PC-3 (cell line): ENCODE measurements at regions of chr1 and their contacts with region 1.

Region 1: GRCh38 chr1:46442317-46443161 is 47.1 kb upstream of the DMBX1 start:
- DNase-seq: peak; percentile 82
- ATAC-seq: peak; percentile 86
- H3K4me3 ChIP-seq: peak overlapping the region; percentile 65
- H3K27ac ChIP-seq: no peak overlapping the region
- H3K4me1 ChIP-seq: no peaks in the 10 kb centered on the region; the same call in 1 of the 2 replicates
- H3K27me3 ChIP-seq: no peaks in the 10 kb centered on the region
- CTCF ChIP-seq: peak; percentile 87

Region 2: GRCh38 chr1:46406881-46407608 is 35.5 kb before region 1 on chr1:
- CTCF ChIA-PET with region 1: no interaction called
- POLR2A ChIA-PET with region 1: no interaction called
- intact Hi-C with region 1: loop called (anchors 2 kb)
- DNase-seq: no peak
- ATAC-seq: no peak
- H3K4me3 ChIP-seq: no peak overlapping the region
- H3K27ac ChIP-seq: no peak overlapping the region
- H3K4me1 ChIP-seq: peaks cover 2% of the 10 kb centered on the region; the same call in 1 of the 2 replicates
- H3K27me3 ChIP-seq: no peaks in the 10 kb centered on the region
- CTCF ChIP-seq: no peak

Region 3: GRCh38 chr1:46425726-46426125 is 16.8 kb before region 1 on chr1:
- CTCF ChIA-PET with region 1: interaction called, 3 read pairs
- POLR2A ChIA-PET with region 1: interaction called, 12 read pairs
- intact Hi-C with region 1: no loop called
- DNase-seq: no peak
- ATAC-seq: no peak
- H3K4me3 ChIP-seq: no peak overlapping the region
- H3K27ac ChIP-seq: no peak overlapping the region
- H3K4me1 ChIP-seq: no peaks in the 10 kb centered on the region
- H3K27me3 ChIP-seq: no peaks in the 10 kb centered on the region
- CTCF ChIP-seq: no peak

Region 4: DNA sequence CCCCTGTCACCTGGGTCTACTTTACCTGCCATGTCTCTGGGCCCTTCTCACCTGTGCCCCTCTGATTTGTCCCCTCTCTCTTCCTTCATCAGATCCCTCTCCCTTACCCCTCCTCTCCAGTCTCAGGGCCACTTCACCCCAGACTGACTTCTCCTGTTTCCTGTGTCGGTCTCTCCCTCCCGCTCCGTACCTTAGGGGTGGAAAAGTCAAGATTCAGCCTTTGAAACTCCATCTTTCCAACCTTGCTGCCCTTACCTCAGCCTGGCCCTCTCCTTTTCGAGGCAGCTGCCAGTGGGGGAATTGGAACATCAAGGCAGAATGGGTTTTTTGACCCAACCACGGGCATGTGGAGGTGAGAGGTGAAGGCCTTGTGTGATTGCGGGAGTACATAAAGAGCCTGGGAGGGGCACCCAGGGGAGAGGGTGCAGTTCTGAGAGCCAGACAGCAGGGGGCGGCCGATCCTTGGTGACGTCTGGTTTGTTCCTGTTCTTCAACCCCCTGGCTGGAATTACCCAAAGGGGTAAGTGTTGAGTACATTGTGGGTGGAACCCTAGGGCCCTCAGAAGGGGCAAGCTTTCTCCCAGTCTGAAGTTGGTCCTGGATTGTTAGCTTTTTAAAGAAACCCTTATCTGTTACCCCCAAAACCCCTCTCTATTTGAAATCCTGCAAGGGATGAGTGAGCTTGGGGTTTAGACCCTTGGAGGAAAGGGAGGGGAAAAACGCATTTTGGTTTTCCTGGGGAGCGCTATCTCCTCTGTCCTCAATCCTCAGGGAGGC is 34.8 kb after region 1 on chr1:
- CTCF ChIA-PET with region 1: interaction called, 3 read pairs
- POLR2A ChIA-PET with region 1: no interaction called
- intact Hi-C with region 1: loop called (anchors 2 kb)
- DNase-seq: peak; percentile 76
- ATAC-seq: peak; percentile 84
- H3K4me3 ChIP-seq: no peak overlapping the region
- H3K27ac ChIP-seq: no peak overlapping the region
- H3K4me1 ChIP-seq: peaks cover 6% of the 10 kb centered on the region; the same call in 1 of the 2 replicates
- H3K27me3 ChIP-seq: no peaks in the 10 kb centered on the region
- CTCF ChIP-seq: peak; percentile 95

Region 5: DNA sequence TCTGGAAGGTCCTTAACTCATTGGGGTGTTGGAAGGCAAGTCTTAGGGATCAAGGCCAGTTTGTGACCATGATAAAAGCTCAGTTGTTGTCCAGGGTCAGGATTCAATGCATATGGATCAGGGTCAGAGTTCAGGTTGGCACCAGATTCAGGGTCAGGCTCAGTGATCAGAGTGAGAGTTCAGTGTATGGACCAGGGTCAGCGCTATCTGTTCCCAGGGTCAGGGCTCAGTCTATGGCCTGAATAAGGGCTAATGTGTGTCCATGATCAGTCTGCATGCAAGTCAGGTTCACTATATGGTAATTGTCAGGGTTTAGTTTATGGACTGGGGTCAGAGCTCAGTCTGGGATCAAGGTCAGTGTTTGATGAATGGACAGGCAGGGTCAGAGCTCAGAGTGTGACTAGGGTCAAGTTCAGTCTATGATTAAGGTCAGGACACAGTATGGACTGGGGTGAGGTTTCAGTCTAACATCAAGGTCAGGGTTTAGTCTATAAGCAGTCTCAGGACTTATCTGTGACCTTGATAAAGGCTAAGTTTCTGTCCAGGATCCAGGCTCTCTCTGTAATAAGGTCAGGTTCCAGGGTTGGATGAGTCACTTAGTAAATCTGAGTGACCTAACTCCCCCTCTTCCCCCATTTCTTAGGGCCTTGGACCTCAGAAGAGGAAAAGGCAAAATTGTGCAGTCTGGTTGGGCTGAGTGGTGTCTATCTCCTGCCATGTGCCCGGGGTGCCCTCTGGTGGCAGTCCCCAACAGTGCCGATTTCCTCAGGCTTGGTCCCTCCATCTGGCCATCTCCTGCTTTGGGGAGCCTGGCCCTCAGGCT is 85.1 kb after region 1 on chr1:
- CTCF ChIA-PET with region 1: interaction called, 13 read pairs
- POLR2A ChIA-PET with region 1: no interaction called
- intact Hi-C with region 1: loop called (anchors 1 kb)
- DNase-seq: peak; percentile 79
- ATAC-seq: peak; percentile 84
- H3K4me3 ChIP-seq: no peak overlapping the region
- H3K27ac ChIP-seq: no peak overlapping the region
- H3K4me1 ChIP-seq: peaks cover 15% of the 10 kb centered on the region
- H3K27me3 ChIP-seq: no peaks in the 10 kb centered on the region
- CTCF ChIP-seq: peak; percentile 95

Region 6: DNA sequence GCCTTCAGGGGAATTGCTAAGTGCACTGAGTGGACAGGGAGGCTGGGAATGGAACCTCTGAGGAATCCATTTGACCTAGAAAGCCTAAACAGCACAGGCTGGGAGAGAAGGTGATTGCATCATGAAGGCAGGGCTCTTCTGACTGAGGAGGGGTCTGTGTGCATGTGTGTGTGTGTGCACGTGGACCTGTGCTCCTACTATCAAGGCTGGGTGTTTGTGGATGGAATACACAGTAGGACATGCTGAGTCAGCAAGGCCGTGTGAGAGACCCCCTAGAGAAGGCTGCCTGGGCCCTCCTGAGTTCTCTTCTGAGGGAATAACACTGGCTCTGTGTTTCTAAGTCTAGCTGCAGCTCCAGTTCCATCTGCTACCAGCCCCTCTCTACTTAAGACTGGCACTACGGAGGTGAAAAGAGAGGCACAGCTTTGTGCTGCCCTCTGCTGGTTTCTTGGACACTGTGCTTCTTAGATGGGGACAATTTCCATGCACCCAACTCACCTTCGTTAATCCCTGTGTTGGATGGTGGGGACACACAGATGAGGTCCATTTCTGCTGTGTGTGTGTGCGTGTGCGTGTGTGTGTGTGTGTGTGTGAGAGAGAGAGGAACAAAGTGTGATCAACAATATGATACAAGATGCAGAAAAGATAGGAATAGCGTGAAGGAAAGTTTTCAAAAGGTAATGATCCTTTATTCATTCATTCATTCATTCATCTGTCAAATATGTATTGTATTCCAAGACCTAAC is 282.6 kb after region 1 on chr1:
- CTCF ChIA-PET with region 1: no interaction called
- POLR2A ChIA-PET with region 1: no interaction called
- intact Hi-C with region 1: loop called (anchors 10 kb)
- DNase-seq: peak; percentile 86
- ATAC-seq: peak; percentile 99
- H3K4me3 ChIP-seq: no peak overlapping the region
- H3K27ac ChIP-seq: no peak overlapping the region
- H3K4me1 ChIP-seq: peaks cover 8% of the 10 kb centered on the region; the same call in 1 of the 2 replicates
- H3K27me3 ChIP-seq: no peaks in the 10 kb centered on the region; the same call in 1 of the 2 replicates
- CTCF ChIP-seq: peak; percentile 93